ENCODE measurements at regions of chr1 and their contacts with region 1.

Region 1: GRCh38 chr1:201254625-201255506 is 28.4 kb upstream of the PKP1 start:
- DNase-seq: peak; percentile 27
- ATAC-seq: peak; percentile 84
- H3K4me3 ChIP-seq: no peak overlapping the region
- H3K27ac ChIP-seq: no peak overlapping the region; the same call in 1 of the 2 replicates
- H3K4me1 ChIP-seq: peaks cover 7 to 11% of the 10 kb centered on the region in 2 experiments; a peak in 3 of 4 replicates
- H3K27me3 ChIP-seq: no peaks in the 10 kb centered on the region
- CTCF ChIP-seq: peak; percentile 96 to 97 (median 97)
- POLR2A ChIP-seq: no peak
- RAD21 ChIP-seq: peak; percentile 100

Region 2: GRCh38 chr1:201288766-201289165 is 33.9 kb after region 1 on chr1:
- CTCF ChIA-PET with region 1: interaction called, 11 read pairs
- POLR2A ChIA-PET with region 1: no interaction called
- RAD21 ChIA-PET with region 1: no interaction called
- intact Hi-C with region 1: no loop called
- DNase-seq: no peak
- ATAC-seq: no peak
- H3K4me3 ChIP-seq: no peak overlapping the region
- H3K27ac ChIP-seq: no peak overlapping the region
- H3K4me1 ChIP-seq: peaks cover 11 to 27% of the 10 kb centered on the region in 2 experiments; a peak in 3 of 4 replicates
- H3K27me3 ChIP-seq: peaks cover 11% of the 10 kb centered on the region; the same call in 1 of the 2 replicates
- CTCF ChIP-seq: no peak
- POLR2A ChIP-seq: no peak
- RAD21 ChIP-seq: no peak; the same call in 1 of the 2 replicates

Region 3: GRCh38 chr1:201309426-201309825 is 54.6 kb after region 1 on chr1:
- CTCF ChIA-PET with region 1: interaction called, 5 read pairs
- POLR2A ChIA-PET with region 1: interaction called, 5 read pairs
- RAD21 ChIA-PET with region 1: interaction called in 1 of 2 experiments, 3 read pairs
- intact Hi-C with region 1: loop called (anchors 1 kb)
- DNase-seq: peak; percentile 39
- ATAC-seq: peak; percentile 74
- H3K4me3 ChIP-seq: no peak overlapping the region
- H3K27ac ChIP-seq: no peak overlapping the region
- H3K4me1 ChIP-seq: peaks cover 36 to 60% of the 10 kb centered on the region in 2 experiments
- H3K27me3 ChIP-seq: no peaks in the 10 kb centered on the region
- CTCF ChIP-seq: peak in 2 of 3 experiments; percentile 12 to 51; a peak in 4 of 6 replicates
- POLR2A ChIP-seq: no peak
- RAD21 ChIP-seq: peak; percentile 73

Region 4: DNA sequence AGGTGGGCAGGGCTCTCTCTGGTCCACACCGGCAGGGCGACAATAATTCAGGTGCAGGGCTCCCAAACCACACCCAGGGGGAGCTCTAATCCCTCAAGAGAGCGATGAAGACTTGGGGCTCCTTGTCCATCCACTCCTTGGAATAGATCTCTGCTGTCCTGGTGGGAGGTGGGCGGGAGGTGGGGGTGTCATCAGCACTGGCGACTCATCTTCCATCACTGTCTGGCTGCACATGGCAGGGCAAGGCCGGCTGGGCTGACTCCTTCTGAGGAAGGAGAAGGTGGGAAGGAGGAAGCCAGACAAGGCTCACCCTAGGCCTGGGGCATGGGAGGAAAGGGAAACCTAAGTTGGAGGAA is 93.3 kb after region 1 on chr1:
- CTCF ChIA-PET with region 1: interaction called, 31 read pairs
- POLR2A ChIA-PET with region 1: no interaction called
- RAD21 ChIA-PET with region 1: interaction called, 3 read pairs
- intact Hi-C with region 1: loop called (anchors 1 kb)
- DNase-seq: peak; percentile 53
- ATAC-seq: peak; percentile 93
- H3K4me3 ChIP-seq: no peak overlapping the region
- H3K27ac ChIP-seq: no peak overlapping the region
- H3K4me1 ChIP-seq: peaks cover 2 to 15% of the 10 kb centered on the region in 2 experiments; a peak in 3 of 4 replicates
- H3K27me3 ChIP-seq: peaks cover 12% of the 10 kb centered on the region; the same call in 1 of the 2 replicates
- CTCF ChIP-seq: peak; percentile 79 to 80 (median 79)
- POLR2A ChIP-seq: no peak
- RAD21 ChIP-seq: peak; percentile 72

Region 5: DNA sequence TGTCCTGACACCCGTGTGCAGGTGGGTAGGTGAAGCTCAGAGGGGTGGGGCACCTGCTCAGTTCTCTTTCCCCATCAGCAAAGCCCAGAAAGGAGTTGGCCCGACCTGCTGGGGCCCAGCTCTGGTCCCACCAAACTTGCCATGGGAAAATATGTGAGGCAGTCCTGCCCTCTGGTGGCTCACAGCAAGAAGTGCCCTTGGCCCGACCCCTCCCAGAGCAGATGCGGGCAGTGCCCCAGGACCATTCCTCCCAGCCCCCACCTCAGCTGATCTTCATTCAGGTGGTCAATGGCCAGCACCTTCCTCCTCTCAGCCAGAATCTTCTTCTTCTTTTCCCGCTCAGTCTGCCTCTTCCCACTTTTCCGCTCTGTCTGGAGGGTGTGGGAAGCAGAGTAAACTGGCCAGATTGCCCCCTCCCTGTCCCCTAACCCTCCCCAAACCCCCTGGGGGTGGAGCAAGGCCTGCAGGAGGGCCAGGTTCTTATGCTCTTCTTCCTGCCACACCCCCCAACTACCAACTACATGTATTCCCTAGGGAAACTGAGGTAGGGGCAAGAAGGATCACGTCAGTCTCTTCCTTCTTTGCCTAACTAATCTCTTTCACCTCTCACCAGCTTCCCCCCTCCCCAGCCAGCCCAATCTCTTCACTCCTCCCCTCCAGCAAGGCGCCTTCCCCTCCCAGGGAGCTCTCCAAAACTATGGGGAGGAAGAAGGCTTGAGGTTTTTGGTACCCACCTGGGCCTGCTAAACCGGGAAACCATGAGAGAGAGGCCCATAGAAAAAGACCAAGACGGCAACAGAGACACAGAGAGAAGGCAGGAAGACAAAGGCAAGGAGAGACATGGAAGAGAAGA is 107.0 kb after region 1 on chr1:
- CTCF ChIA-PET with region 1: interaction called, 31 read pairs
- POLR2A ChIA-PET with region 1: interaction called, 3 read pairs
- RAD21 ChIA-PET with region 1: interaction called, 3 to 10 read pairs
- intact Hi-C with region 1: loop called (anchors 1 kb)
- DNase-seq: peak; percentile 32
- ATAC-seq: peak; percentile 93
- H3K4me3 ChIP-seq: no peak overlapping the region
- H3K27ac ChIP-seq: no peak overlapping the region
- H3K4me1 ChIP-seq: no peaks in the 10 kb centered on the region
- H3K27me3 ChIP-seq: peaks cover 9% of the 10 kb centered on the region; the same call in 1 of the 2 replicates
- CTCF ChIP-seq: peak; percentile 79 to 91 (median 88)
- POLR2A ChIP-seq: no peak
- RAD21 ChIP-seq: peak; percentile 99